Dendritic cell treated with granulocyte-macrophage colony-stimulating factor and Interleukin-4, amounts not matched to agents 40 ng/mL and 50 ng/mL, for 4 days (primary cell): ENCODE measurements at regions of chr17 and their contacts with region 1.

Region 1: DNA sequence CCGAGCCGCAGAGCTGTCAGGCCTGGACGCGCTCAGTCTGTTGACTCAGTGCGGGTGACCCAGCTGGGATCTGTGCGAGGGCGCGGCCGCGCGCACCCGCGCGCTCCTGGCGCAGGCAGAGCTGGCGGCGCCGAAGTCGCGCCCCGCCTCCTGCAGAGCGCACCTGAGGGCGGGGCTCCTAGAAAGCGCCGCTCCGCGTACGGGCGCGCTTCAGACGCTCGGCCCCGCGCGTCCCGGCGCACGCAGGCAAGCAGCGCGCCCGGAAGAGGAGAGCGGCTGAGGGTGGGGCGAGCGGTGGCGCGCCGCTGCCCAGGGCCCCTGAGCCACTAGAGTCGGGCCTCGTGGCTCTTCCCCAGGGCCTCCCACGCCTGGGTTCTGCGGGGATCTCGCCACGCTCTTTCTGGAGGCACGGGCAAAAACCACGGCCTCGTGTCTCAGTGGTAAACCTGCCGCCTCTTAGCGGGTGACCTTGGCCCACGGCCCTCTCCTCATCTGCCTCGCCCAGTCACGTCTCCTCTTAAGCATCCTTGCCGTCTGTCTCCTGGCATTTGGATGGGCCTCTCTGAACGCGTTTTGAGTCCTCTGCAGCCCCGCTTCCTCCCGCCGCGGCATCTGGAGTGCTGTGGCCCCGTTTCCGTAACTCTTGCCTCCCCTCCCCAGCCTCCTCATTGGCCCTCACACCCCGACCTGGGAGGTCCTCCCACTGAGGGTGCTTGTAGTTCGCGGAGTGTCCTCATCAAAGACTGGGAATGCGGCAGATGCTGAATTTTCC is at the start of gene ABCA5:
- H3K4me3 Mint-ChIP-seq: peak within 1 kb of the TSS; percentile 96
- H3K27ac Mint-ChIP-seq: peak within 1 kb of the TSS; percentile 91
- H3K4me1 Mint-ChIP-seq: peaks cover 33% of the 10 kb centered on the region
- H3K27me3 Mint-ChIP-seq: peaks cover 21% of the 10 kb centered on the region

Region 2: GRCh38 chr17:69287168-69287567 is 40.1 kb before region 1 on chr17:
- intact Hi-C with region 1: no loop called
- H3K4me3 Mint-ChIP-seq: no peak overlapping the region
- H3K27ac Mint-ChIP-seq: no peak overlapping the region
- H3K4me1 Mint-ChIP-seq: peaks cover 2% of the 10 kb centered on the region
- H3K27me3 Mint-ChIP-seq: no peaks in the 10 kb centered on the region

Region 3: GRCh38 chr17:69388822-69389442 is 61.7 kb after region 1 on chr17:
- intact Hi-C with region 1: loop called (anchors 2 kb)
- H3K4me3 Mint-ChIP-seq: no peak overlapping the region
- H3K27ac Mint-ChIP-seq: no peak overlapping the region
- H3K4me1 Mint-ChIP-seq: peaks cover 5% of the 10 kb centered on the region
- H3K27me3 Mint-ChIP-seq: peaks cover 19% of the 10 kb centered on the region